Tibial artery (tissue), 4 donors: ENCODE measurements at regions of chr1 and their contacts with region 1.

Region 1: GRCh38 chr1:17419626-17420328 is 19.7 kb downstream of the RCC2 start:
- DNase-seq: peak; percentile 54 to 82
- H3K4me3 ChIP-seq: no peak overlapping the region
- H3K27ac ChIP-seq: no peak overlapping the region
- H3K4me1 ChIP-seq: peaks cover 0 to 4% (median 4%) of the 10 kb centered on the region in 4 donors
- H3K27me3 ChIP-seq: no peaks in the 10 kb centered on the region
- CTCF ChIP-seq: peak; percentile 98 to 100

Region 2: DNA sequence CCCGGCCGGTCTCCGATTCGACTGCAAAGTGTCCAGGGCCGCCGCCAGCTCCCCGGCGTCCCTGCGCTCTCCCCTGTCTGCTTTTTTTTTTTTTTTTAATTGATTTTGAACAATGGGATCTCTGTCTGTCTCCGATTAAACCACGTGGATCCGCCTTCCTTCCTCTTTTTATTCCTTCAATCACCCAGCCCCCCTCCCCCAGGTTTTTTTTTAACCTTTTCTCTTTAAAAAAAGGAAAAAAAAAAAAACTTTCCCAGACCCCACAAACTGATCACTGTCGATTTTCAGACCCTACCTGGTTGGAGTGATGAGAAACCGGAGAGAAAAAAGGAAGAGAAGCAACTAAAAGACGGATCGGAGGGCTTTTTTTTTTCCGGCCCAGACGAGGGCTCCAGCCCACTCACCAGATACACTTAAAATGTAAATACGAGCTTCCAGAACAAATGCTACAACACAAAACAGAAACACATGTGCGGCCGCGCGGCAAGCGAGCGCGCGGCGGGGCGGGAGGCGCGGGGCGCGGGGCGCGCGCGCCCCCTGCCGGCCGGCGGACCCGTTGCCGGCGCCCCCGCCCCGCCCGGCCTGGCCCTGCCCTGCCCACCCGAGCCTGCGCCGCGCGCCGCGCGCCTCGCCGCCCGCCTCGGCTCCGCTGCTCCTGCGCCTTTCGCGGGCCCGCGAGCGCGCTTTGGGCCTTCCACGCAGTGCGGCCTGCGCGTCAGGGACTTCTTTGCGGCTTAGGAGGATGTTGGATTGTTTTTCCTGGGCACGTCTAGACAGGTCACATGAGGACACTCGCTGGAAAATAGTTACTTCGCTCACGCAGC is 19.7 kb after region 1 on chr1 and contains the start of gene RCC2:
- intact Hi-C with region 1: loop called (anchors 2 kb)
- DNase-seq: peak; percentile 36 to 76
- H3K4me3 ChIP-seq: peak within 1 kb of the TSS; percentile 72 to 81
- H3K27ac ChIP-seq: peak within 1 kb of the TSS; percentile 70 to 75
- H3K4me1 ChIP-seq: peaks cover 0 to 25% (median 13%) of the 10 kb centered on the region in 4 donors
- H3K27me3 ChIP-seq: no peaks in the 10 kb centered on the region
- CTCF ChIP-seq: no peak

Region 3: GRCh38 chr1:17480846-17481245 is 61.1 kb after region 1 on chr1:
- intact Hi-C with region 1: loop called (anchors 5 kb)
- DNase-seq: no peak
- H3K4me3 ChIP-seq: no peak overlapping the region
- H3K27ac ChIP-seq: no peak overlapping the region
- H3K4me1 ChIP-seq: no peaks in the 10 kb centered on the region
- H3K27me3 ChIP-seq: peaks cover 0 to 23% of the 10 kb centered on the region in 2 donors
- CTCF ChIP-seq: no peak